ENCODE measurements at regions of chr4 and their contacts with region 1.

Region 1: GRCh38 chr4:36198068-36198808 is 46.1 kb downstream of the ARAP2 start:
- DNase-seq: no peak
- ATAC-seq: no peak
- H3K4me3 Mint-ChIP-seq: no peak overlapping the region
- H3K27ac Mint-ChIP-seq: no peak overlapping the region
- H3K4me1 Mint-ChIP-seq: no peaks in the 10 kb centered on the region
- H3K27me3 Mint-ChIP-seq: no peaks in the 10 kb centered on the region
- CTCF ChIP-seq: no peak

Region 2: DNA sequence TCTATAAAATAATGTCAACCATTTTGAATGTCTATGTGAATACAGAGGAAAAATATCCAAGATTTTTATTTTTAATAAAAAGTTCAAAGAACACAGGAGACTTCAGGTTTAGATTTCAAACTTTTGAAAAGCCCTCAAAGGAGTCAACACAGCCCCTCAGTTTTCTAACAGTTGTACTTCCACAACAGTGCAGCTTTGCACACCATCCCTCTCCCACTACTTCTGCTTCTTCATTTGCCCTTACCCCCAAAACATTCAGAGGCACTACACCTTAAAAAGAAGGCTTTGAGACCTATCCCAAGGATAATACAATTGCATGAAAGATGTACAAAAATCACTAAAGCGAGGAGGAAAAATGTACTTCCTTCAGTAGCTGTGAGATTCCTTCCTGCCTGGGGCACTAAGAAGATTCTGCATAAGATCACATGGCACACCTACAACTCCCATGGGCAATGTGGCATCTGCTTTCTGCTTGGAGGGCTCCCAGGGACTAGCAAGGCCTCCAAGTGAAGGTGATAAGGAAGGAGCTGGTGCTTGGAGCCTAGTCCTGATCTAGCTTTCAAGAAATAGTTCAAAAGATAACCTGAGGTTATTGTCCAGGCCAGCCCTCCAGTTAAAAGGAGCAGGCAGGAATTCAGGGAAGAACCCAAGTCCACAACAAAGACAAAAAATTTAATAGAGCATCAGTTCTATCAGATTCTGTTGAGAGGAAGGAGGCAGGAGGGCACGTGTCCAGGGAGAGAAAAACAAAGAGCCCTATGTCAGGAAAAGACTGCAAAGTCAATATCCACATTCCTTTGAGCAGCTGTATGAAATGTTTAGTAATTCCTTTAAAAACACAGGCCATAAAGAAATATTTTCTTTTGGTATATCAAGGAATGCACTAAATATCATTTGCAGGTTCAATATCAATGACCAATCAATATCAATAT is 27.0 kb after region 1 on chr4:
- CTCF ChIA-PET with region 1: interaction called, 5 read pairs
- POLR2A ChIA-PET with region 1: no interaction called
- intact Hi-C with region 1: loop called (anchors 2 kb)
- DNase-seq: peak; percentile 16
- ATAC-seq: peak; percentile 78
- H3K4me3 Mint-ChIP-seq: peak overlapping the region; percentile 11
- H3K27ac Mint-ChIP-seq: peak overlapping the region; percentile 72
- H3K4me1 Mint-ChIP-seq: peaks cover 61% of the 10 kb centered on the region
- H3K27me3 Mint-ChIP-seq: no peaks in the 10 kb centered on the region
- CTCF ChIP-seq: no peak

Region 3: GRCh38 chr4:36235314-36235713 is 37.1 kb after region 1 on chr4:
- CTCF ChIA-PET with region 1: no interaction called
- POLR2A ChIA-PET with region 1: no interaction called
- intact Hi-C with region 1: no loop called
- DNase-seq: no peak
- ATAC-seq: no peak
- H3K4me3 Mint-ChIP-seq: no peak overlapping the region
- H3K27ac Mint-ChIP-seq: no peak overlapping the region
- H3K4me1 Mint-ChIP-seq: peaks cover 72% of the 10 kb centered on the region
- H3K27me3 Mint-ChIP-seq: no peaks in the 10 kb centered on the region
- CTCF ChIP-seq: no peak

Measured in activated B cell treated with CpG ODN at 0.5 μM for 24 hours (primary cell).